Right ventricle myocardium superior (tissue), 1 donor: ENCODE measurements at regions of chr3 and their contacts with region 1.

Region 1: GRCh38 chr3:186614597-186615483 is 2.0 kb downstream of the AHSG start:
- DNase-seq: peak; percentile 78
- ATAC-seq: peak; percentile 85

Region 2: DNA sequence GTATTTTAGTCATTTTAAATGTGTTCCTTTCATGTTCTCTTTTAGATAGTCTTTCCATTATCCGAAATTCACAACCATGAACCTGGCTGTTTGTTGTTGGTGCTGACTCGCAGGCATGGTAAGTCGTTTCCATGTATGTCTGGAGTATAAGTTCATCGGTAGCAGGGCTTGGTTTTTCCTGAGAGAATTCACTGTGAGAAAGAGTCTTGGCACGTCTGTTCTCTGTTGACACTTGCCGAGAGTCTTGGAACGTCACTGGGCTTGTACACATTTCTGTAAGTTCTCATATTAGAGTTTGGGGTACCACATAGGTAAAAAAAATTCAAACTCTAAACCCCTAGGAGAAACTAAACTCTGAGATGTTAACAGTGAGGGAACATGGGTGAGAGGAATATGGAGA is 139.2 kb after region 1 on chr3:
- intact Hi-C with region 1: loop called (anchors 2 kb)
- DNase-seq: no peak
- ATAC-seq: no peak

Region 3: GRCh38 chr3:186821429-186822367 is 206.9 kb after region 1 on chr3:
- intact Hi-C with region 1: loop called (anchors 2 kb)
- DNase-seq: no peak
- ATAC-seq: peak; percentile 42

Region 4: GRCh38 chr3:186871403-186871924 is 256.6 kb after region 1 on chr3:
- intact Hi-C with region 1: no loop called
- DNase-seq: no peak
- ATAC-seq: no peak